BJ (cell line): ENCODE measurements at regions of chr14 and their contacts with region 1.

Region 1: GRCh38 chr14:56491299-56492285 is 88.0 kb upstream of the TMEM260 start:
- DNase-seq: no peak
- H3K4me3 ChIP-seq: no peak overlapping the region
- H3K27me3 ChIP-seq: no peaks in the 10 kb centered on the region; the same call in 1 of the 2 replicates
- CTCF ChIP-seq: peak; percentile 81

Region 2: GRCh38 chr14:55446218-55446654 is 1045.4 kb before region 1 on chr14:
- CTCF ChIA-PET with region 1: interaction called, 10 read pairs
- POLR2A ChIA-PET with region 1: no interaction called
- DNase-seq: no peak
- H3K4me3 ChIP-seq: no peak overlapping the region
- H3K27me3 ChIP-seq: no peaks in the 10 kb centered on the region
- CTCF ChIP-seq: peak; percentile 69

Region 3: GRCh38 chr14:56501909-56502530 is 10.4 kb after region 1 on chr14:
- CTCF ChIA-PET with region 1: interaction called, 13 read pairs
- POLR2A ChIA-PET with region 1: no interaction called
- DNase-seq: no peak
- H3K4me3 ChIP-seq: no peak overlapping the region
- H3K27me3 ChIP-seq: no peaks in the 10 kb centered on the region
- CTCF ChIP-seq: no peak

Region 4: GRCh38 chr14:57317316-57317715 is 825.7 kb after region 1 on chr14:
- CTCF ChIA-PET with region 1: interaction called, 39 read pairs
- POLR2A ChIA-PET with region 1: no interaction called
- DNase-seq: peak; percentile 4
- H3K4me3 ChIP-seq: no peak overlapping the region
- H3K27me3 ChIP-seq: peaks cover 2% of the 10 kb centered on the region; the same call in 1 of the 2 replicates
- CTCF ChIP-seq: peak; percentile 84